ENCODE measurements at regions of chr14 and their contacts with region 1.

Region 1: GRCh38 chr14:102516531-102517415 is 7.2 kb upstream of the ANKRD9 start:
- DNase-seq: no peak
- H3K4me3 ChIP-seq: peak overlapping the region; percentile 54 to 94 (median 89)
- H3K27ac ChIP-seq: peak overlapping the region; percentile 80 to 82
- H3K4me1 ChIP-seq: no peaks in the 10 kb centered on the region
- H3K27me3 ChIP-seq: no peaks in the 10 kb centered on the region
- CTCF ChIP-seq: peak; percentile 26 to 97 (median 39)
- POLR2A ChIP-seq: no peak

Region 2: GRCh38 chr14:100709289-100710284 is 1807.2 kb before region 1 on chr14:
- intact Hi-C with region 1: no loop called
- DNase-seq: peak in 1 of 2 donors; percentile 22
- H3K4me3 ChIP-seq: peak overlapping the region; percentile 7 to 52 (median 28)
- H3K27ac ChIP-seq: no peak overlapping the region
- H3K4me1 ChIP-seq: peaks cover 0 to 3% of the 10 kb centered on the region in 2 donors
- H3K27me3 ChIP-seq: peaks cover 0 to 20% of the 10 kb centered on the region in 2 donors
- CTCF ChIP-seq: peak in 2 of 3 donors; percentile 14 to 21
- POLR2A ChIP-seq: no peak

Region 3: DNA sequence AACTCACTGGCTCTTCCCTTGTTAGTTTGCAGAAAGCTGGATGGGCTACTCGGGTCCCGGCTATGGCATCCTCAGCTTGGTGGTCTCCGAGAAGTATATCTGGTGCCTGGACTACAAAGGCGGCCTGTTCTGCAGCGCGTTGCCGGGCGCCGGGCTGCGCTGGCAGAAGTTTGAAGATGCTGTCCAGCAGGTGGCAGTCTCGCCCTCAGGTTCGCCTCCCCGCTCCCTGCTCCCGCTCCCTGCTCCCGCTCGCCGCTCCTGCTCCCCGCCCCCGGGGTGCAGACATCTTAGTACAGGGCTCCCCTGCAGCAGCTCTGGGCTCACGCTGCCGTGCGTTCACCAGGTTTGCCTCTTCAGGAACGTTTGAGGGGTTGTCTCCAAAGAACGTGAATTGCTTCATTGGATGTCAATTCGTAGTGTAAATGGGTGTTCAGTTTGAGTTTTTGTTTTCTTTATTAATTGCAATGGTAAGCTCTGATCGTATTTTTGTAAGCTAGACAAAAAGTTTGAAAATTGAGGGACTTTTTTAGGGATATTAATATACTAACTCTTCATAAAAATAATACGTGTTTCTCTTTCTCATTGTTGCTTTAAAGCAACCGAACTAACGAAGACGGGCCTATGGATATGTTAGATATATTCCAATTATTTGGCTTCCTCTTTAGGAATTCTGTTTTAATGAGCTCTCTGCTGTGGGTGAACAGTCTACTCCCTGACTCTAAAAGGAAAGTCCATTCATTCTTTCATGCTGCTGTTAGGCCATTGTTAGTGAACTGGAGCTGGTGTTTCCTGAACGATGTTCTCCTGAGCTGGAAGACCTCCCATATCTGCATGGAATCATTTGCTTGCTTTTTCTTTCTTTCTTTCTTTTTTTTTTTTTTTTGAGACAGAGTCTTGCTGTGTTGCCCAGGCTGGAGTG is 78.5 kb before region 1 on chr14:
- intact Hi-C with region 1: loop called (anchors 2 kb)
- DNase-seq: peak; percentile 72 to 91
- H3K4me3 ChIP-seq: peak overlapping the region; percentile 20 to 57 (median 27)
- H3K27ac ChIP-seq: no peak overlapping the region
- H3K4me1 ChIP-seq: no peaks in the 10 kb centered on the region
- H3K27me3 ChIP-seq: no peaks in the 10 kb centered on the region
- CTCF ChIP-seq: peak; percentile 57 to 81 (median 76)
- POLR2A ChIP-seq: no peak

Region 4: DNA sequence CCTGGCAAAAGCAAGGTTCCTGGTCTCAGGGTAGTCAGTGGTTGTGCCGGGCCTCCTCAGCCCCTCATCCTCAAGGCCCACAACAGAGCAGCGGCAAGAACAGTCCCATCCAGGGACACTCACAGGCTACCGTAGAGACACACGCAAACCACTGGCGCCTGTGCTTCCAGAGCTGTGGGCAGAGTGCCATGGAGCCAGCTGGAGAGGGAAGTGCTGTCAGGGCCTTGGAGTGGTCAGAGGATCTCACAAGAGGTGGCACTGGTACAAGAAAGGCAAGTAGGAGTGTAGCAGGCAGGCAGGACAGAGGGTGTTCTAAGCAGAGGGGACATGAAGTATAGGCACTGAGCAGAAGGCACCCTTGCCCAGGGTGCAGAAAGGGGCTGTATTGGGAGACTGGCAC is 41.8 kb before region 1 on chr14:
- intact Hi-C with region 1: no loop called
- DNase-seq: no peak
- H3K4me3 ChIP-seq: no peak overlapping the region
- H3K27ac ChIP-seq: peak overlapping the region in 1 of 2 donors; percentile 37
- H3K4me1 ChIP-seq: no peaks in the 10 kb centered on the region
- H3K27me3 ChIP-seq: no peaks in the 10 kb centered on the region
- CTCF ChIP-seq: no peak
- POLR2A ChIP-seq: no peak

Region 5: GRCh38 chr14:103361868-103362267 is 845.1 kb after region 1 on chr14:
- intact Hi-C with region 1: no loop called
- DNase-seq: no peak
- H3K4me3 ChIP-seq: no peak overlapping the region
- H3K27ac ChIP-seq: no peak overlapping the region
- H3K4me1 ChIP-seq: no peaks in the 10 kb centered on the region
- H3K27me3 ChIP-seq: no peaks in the 10 kb centered on the region
- CTCF ChIP-seq: no peak
- POLR2A ChIP-seq: no peak

Region 6: GRCh38 chr14:103600503-103600902 is 1083.7 kb after region 1 on chr14:
- intact Hi-C with region 1: loop called (anchors 5 kb)
- DNase-seq: no peak
- H3K4me3 ChIP-seq: no peak overlapping the region
- H3K27ac ChIP-seq: no peak overlapping the region
- H3K4me1 ChIP-seq: no peaks in the 10 kb centered on the region
- H3K27me3 ChIP-seq: no peaks in the 10 kb centered on the region
- CTCF ChIP-seq: no peak
- POLR2A ChIP-seq: no peak